A673 (cell line): ENCODE measurements at regions of chr3 and their contacts with region 1.

Region 1: DNA sequence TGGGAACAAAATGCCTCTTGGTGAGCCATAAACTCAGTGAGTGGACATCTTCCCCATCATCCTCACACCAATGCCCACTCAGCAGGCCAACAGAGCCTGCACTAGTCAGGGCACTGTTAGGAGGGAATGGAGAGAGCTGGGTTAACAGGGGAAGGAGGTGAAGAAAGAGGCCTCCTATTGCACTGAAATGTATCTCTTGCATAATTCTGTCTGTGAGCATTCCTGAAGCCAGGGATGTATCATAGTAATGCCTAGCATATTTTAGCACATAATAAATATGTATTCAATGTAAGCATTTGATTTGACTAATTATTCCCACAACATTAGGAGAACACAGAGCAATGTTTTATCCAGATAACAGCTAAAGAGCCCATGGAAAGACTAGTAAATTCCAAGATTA is 81.2 kb downstream of the ANO10 start:
- DNase-seq: no peak
- H3K4me3 ChIP-seq: no peak overlapping the region
- H3K27ac ChIP-seq: no peak overlapping the region
- H3K4me1 ChIP-seq: no peaks in the 10 kb centered on the region
- H3K27me3 ChIP-seq: no peaks in the 10 kb centered on the region
- CTCF ChIP-seq: no peak

Region 2: DNA sequence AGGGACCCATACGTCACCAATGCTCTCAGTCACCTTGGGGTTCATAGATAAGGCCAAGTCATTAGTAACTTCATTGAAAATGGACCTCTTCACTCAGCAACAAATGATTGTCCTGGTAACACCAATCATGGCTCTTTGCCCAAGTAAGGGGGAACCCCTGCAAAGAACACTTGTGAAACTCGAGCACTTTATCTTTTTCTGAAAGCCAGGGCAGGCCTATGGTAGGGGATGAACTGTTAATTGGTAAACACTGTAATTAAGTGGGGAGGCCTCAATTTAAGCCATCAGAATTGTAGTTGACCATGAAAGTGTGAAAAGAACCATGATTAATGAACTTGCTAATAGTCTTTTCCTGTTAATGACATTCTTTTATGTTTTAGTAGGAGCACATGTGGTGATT is 223.4 kb after region 1 on chr3:
- CTCF ChIA-PET with region 1: no interaction called
- POLR2A ChIA-PET with region 1: no interaction called
- intact Hi-C with region 1: loop called (anchors 5 kb)
- DNase-seq: no peak
- H3K4me3 ChIP-seq: no peak overlapping the region
- H3K27ac ChIP-seq: no peak overlapping the region
- H3K4me1 ChIP-seq: peaks cover 3% of the 10 kb centered on the region
- H3K27me3 ChIP-seq: no peaks in the 10 kb centered on the region
- CTCF ChIP-seq: no peak

Region 3: DNA sequence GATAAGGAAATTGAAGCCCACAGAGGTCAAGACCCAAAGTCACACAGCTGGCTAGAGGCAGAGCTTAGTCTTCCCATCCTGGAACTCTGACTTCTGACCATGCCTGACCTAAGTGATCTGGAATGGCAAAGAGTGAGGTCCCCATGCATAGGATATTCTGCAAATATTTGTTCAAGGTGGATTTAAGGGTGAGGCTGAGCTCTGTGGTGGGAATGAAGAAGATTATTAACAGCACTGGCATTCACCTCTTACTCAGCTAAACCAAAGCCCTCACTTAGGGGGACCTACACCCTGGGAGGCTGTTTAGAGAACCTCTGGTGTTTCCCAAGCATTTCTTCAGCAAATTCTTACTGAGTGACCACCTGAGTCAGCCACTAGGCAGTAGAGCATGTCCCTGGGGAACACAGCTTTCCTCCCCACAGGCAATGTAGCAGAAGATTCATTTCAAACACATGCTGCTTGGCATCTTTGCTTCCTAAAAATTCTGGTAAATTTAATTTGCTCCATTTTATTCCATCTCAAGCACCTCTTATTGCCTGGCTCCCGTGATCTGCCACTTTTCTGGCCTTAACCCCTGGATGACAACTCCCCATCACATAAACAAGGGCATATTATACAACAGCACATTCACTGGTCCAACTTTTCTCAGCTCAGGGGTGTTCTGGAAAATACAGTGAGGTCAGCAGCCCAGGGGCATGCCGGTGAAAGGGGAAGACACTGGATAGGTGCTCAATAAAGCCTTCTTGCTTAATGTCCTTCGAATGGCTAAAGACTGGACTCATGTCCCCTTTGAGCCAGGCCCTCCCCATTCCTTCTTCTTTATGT is 326.1 kb after region 1 on chr3:
- CTCF ChIA-PET with region 1: no interaction called
- POLR2A ChIA-PET with region 1: no interaction called
- intact Hi-C with region 1: no loop called
- DNase-seq: no peak
- H3K4me3 ChIP-seq: no peak overlapping the region
- H3K27ac ChIP-seq: no peak overlapping the region
- H3K4me1 ChIP-seq: no peaks in the 10 kb centered on the region
- H3K27me3 ChIP-seq: no peaks in the 10 kb centered on the region
- CTCF ChIP-seq: no peak